ENCODE measurements at regions of chr12 and their contacts with region 1.

Region 1: DNA sequence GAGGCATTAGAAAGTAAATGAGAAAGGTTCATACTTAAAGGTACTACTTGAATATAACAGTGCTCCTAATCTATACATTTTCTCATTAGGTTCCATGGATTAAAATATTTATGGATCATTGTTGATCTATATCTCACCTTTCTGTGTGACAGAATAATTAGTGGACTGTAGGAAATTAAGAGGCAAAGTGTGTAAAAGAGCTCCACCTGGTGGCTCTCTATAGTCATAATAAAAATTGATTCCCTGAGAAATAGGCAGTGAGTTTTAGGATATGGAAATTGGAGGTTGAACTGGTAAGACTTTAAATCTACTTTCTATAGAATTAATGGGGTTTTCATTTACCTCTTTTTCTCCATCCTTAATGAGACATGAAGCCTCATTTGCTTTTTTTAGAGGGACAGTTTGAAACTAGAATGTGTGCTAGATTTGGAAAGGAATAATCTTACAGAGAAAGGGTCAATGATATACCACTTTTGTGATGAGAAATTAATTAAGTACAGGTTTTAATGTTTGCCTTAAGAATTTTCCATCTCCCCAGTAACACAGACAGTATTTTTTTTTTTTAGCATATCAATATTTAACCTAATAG is 11.8 kb upstream of the DERA start:
- DNase-seq: peak; percentile 48
- H3K4me3 ChIP-seq: no peak overlapping the region
- H3K27ac ChIP-seq: no peak overlapping the region
- H3K4me1 ChIP-seq: no peaks in the 10 kb centered on the region
- H3K27me3 ChIP-seq: no peaks in the 10 kb centered on the region
- CTCF ChIP-seq: peak; percentile 81

Region 2: GRCh38 chr12:15590180-15590826 is 309.1 kb before region 1 on chr12:
- CTCF ChIA-PET with region 1: no interaction called
- POLR2A ChIA-PET with region 1: no interaction called
- intact Hi-C with region 1: loop called (anchors 1 kb)
- DNase-seq: peak; percentile 80
- H3K4me3 ChIP-seq: peak overlapping the region; percentile 30
- H3K27ac ChIP-seq: no peak overlapping the region
- H3K4me1 ChIP-seq: no peaks in the 10 kb centered on the region
- H3K27me3 ChIP-seq: no peaks in the 10 kb centered on the region
- CTCF ChIP-seq: peak; percentile 94

Region 3: DNA sequence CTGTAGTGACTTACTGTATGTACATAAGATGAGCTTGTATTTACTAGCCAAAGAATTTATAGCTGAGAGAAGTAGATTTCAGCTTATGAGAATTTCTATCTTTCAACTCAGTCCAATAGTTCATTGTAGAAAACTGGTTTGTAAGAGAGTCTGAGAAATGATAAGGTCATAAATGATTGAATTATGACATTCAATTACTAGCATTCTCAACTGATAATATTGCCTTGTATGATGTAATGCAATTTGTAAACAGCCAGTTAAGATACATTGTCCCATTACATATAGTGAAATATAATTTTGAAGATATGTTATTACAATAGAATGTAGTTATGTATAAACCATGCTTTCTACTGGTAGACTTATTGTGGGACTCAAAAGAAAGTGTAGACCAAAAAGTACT is 59.7 kb before region 1 on chr12:
- CTCF ChIA-PET with region 1: no interaction called
- POLR2A ChIA-PET with region 1: interaction called, 14 read pairs
- intact Hi-C with region 1: no loop called
- DNase-seq: no peak
- H3K4me3 ChIP-seq: no peak overlapping the region
- H3K27ac ChIP-seq: no peak overlapping the region
- H3K4me1 ChIP-seq: no peaks in the 10 kb centered on the region
- H3K27me3 ChIP-seq: no peaks in the 10 kb centered on the region
- CTCF ChIP-seq: no peak